Right ventricle myocardium inferior (tissue), 1 donor: ENCODE measurements at regions of chr9 and their contacts with region 1.

Region 1: DNA sequence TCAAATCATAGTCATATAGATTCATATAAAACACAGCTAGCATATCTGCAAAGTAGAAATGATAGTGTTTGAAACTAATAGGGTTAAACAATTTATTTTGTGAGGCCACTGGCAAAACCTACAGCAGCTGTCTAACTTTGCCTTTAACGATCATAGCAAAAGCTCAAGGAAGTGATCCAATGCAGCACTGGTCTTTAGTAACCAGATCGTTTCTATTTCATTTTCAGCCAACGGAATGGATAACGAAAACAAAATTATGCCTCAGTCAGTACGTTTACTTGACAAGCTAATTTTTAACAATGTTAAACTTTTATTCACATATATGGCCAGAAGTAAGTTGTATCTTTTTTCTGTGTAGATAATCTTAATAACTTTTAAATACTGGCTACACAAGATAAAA is 17.7 kb downstream of the MLLT3 start:
- DNase-seq: no peak
- ATAC-seq: no peak

Region 2: GRCh38 chr9:20562051-20562450 is 42.5 kb before region 1 on chr9:
- intact Hi-C with region 1: loop called (anchors 5 kb)
- DNase-seq: no peak
- ATAC-seq: no peak